Heart right ventricle (tissue), 16 donors: ENCODE measurements at regions of chr19 and their contacts with region 1.

Region 1: GRCh38 chr19:13150187-13150930 is at the starts of genes IER2 and STX10:
- DNase-seq: peak; percentile 94 to 98
- ATAC-seq: peak; percentile 63 to 82 (median 78)
- H3K4me3 ChIP-seq: peak within 1 kb of the TSS; percentile 64 to 100 (median 92)
- H3K27ac ChIP-seq: peak within 1 kb of the TSS; percentile 91 to 100 (median 98)
- H3K4me1 ChIP-seq: peaks cover 0 to 33% (median 24%) of the 10 kb centered on the region in 9 donors
- H3K27me3 ChIP-seq: no peaks in the 10 kb centered on the region
- CTCF ChIP-seq: peak; percentile 31 to 80 (median 67)
- total RNA-seq, gene IER2: 19.2 to 54.6 (median 36.0) TPM
- total RNA-seq, gene STX10: 18.7 to 50.4 (median 25.4) TPM

Region 2: DNA sequence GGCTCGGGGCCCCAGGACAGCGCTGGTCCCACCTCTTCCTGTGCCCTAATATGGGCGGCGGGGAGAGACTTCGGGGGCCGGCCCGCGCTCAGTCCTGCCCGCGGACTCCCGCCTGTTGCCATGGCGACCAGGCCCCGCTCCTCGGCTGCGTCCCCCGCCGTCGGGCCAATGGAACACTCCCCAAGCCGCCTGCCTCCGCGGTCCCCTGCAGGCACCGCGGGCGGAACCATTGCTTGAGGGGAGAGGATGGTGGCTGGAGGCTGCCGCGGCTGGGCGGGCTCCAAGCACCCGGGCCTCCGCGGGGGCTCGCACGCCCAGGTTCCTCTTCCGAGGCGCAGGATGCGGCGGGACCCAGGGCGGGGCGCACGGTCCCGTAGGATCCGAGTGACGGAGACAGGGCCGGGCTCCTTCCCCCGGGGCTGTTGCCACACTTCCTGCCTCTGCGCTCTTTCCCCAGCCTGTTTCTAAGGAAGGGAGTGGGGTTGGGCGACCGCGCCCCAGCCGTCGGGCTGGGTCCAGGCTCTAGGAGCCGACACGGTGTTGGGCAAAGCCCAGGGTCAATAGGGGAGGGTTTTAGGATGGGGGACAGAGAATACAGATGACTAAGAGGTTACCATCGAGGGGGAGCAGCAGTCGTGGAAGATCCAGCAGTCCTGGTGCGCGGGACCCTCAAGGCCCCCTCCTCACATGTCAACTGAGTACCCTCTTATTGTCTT is 360.3 kb before region 1 on chr19:
- intact Hi-C with region 1: loop called in 2 of 10 experiments (anchors 5 to 10 kb)
- DNase-seq: peak; percentile 97 to 98
- ATAC-seq: peak; percentile 41 to 65 (median 56)
- H3K4me3 ChIP-seq: peak overlapping the region; percentile 30 to 100 (median 85)
- H3K27ac ChIP-seq: peak overlapping the region; percentile 94 to 100 (median 99)
- H3K4me1 ChIP-seq: peaks cover 33 to 68% (median 57%) of the 10 kb centered on the region in 9 donors
- H3K27me3 ChIP-seq: no peaks in the 10 kb centered on the region
- CTCF ChIP-seq: no peak

Region 3: DNA sequence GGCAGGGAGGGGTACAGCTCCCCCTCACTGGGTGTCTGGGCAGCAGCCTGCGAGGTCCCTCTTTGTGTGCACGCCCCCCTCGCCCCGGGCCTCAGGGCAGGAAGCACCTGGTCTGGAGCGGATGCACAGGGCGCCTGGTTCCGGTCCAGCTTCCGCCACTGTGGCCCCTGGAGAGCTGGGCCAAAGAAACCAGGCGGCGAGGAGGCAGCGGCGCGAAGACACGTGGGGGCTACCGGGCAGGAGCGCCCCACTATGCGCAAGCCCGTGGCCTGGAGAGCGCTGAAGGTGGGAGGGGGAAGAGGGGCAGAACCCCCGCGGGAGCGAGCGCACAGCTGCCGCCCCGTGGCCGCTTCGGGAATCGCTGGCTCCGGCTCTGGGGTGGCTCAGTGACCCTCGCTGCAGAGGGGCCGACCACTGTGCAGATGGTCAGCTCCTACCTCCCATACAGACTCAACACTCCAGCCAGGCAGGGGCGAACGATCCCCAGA is 46.0 kb before region 1 on chr19:
- intact Hi-C with region 1: loop called in 7 of 10 experiments (anchors 1 to 5 kb)
- DNase-seq: peak; percentile 80 to 85
- ATAC-seq: peak; percentile 8 to 51 (median 43)
- H3K4me3 ChIP-seq: peak overlapping the region in 6 of 10 donors; percentile 23 to 60 (median 28)
- H3K27ac ChIP-seq: peak overlapping the region; percentile 52 to 96 (median 92)
- H3K4me1 ChIP-seq: peaks cover 13 to 69% (median 53%) of the 10 kb centered on the region in 9 donors
- H3K27me3 ChIP-seq: no peaks in the 10 kb centered on the region
- CTCF ChIP-seq: peak; percentile 46 to 86 (median 72)

Region 4: GRCh38 chr19:13162518-13163314 is 12.4 kb after region 1 on chr19:
- intact Hi-C with region 1: loop called in 2 of 10 experiments (anchors 1 to 2 kb)
- DNase-seq: peak; percentile 96 to 99
- ATAC-seq: peak; percentile 84 to 92 (median 87)
- H3K4me3 ChIP-seq: peak overlapping the region in 9 of 10 donors; percentile 17 to 55 (median 45)
- H3K27ac ChIP-seq: peak overlapping the region; percentile 81 to 99 (median 96)
- H3K4me1 ChIP-seq: peaks cover 18 to 79% (median 59%) of the 10 kb centered on the region in 9 donors
- H3K27me3 ChIP-seq: no peaks in the 10 kb centered on the region
- CTCF ChIP-seq: no peak

Region 5: GRCh38 chr19:13234518-13234917 is 84.2 kb after region 1 on chr19:
- intact Hi-C with region 1: no loop called
- DNase-seq: peak; percentile 18 to 35
- ATAC-seq: peak in 1 of 8 donors; percentile 48
- H3K4me3 ChIP-seq: no peak overlapping the region
- H3K27ac ChIP-seq: no peak overlapping the region
- H3K4me1 ChIP-seq: no peaks in the 10 kb centered on the region
- H3K27me3 ChIP-seq: peaks cover 0 to 20% (median 7%) of the 10 kb centered on the region in 7 donors
- CTCF ChIP-seq: peak in 7 of 9 donors; percentile 10 to 50 (median 45)

Region 6: DNA sequence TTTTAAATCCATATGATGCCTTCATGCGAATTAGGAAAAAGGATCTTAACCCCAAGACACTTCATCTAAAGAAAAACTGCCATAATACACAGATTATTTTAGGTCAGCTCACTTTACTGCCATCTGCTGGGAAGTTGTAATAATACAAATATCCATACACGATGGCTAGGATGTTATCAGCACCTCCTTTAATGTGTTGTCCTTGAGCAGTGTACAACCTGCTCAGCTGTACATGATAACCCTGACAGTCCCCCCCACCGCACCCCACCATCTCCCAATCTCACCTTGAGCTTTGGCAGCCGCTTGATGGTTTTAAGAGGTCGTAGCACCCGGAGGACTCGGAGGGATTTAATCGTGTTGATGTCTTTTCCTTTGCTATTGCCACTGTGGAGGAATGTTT is 112.1 kb after region 1 on chr19:
- intact Hi-C with region 1: loop called in 3 of 10 experiments (anchors 2 to 5 kb)
- DNase-seq: no peak
- ATAC-seq: peak; percentile 33 to 75 (median 58)
- H3K4me3 ChIP-seq: no peak overlapping the region
- H3K27ac ChIP-seq: no peak overlapping the region
- H3K4me1 ChIP-seq: peaks cover 0 to 18% (median 0%) of the 10 kb centered on the region in 9 donors
- H3K27me3 ChIP-seq: peaks cover 0 to 5% (median 0%) of the 10 kb centered on the region in 7 donors
- CTCF ChIP-seq: peak in 8 of 9 donors; percentile 39 to 76 (median 66)